Posterior vena cava (tissue), 2 donors: ENCODE measurements at regions of chr3 and their contacts with region 1.

Region 1: GRCh38 chr3:69682878-69683806 is 56.1 kb upstream of the MITF start:
- DNase-seq: no peak

Region 2: GRCh38 chr3:69791919-69792399 is 108.8 kb after region 1 on chr3:
- intact Hi-C with region 1: loop called in 1 of 2 experiments (anchors 5 kb)
- DNase-seq: no peak

Region 3: DNA sequence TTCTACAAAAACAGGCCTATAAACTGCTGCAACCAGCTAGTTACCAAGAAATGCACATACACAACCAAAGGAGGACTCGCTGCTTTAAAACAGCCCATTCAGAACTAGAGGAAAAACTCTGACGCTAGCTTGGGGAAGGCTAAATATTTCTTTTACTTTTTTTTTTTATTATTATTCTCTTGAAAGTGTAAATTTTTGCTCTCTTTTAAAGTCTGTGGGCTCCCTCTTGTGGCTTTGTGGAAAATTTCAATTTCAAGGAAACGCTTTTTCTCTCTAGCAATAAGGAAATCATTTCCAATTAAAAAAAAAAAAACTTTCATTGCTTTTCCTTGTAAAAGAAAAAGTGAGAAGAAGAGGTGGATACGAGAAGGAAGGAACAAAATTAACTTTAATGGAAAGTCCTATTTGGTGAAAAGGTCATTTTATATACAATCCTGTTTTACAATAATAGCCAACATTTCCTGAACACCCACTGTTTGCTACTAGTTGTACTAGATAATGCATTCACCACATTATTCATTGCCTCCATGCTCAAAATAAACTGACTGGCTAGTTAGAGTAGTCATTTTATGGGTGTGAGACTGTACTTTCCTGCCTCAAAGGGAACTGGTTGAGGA is 265.2 kb after region 1 on chr3:
- intact Hi-C with region 1: loop called (anchors 5 to 10 kb)
- DNase-seq: no peak

Region 4: DNA sequence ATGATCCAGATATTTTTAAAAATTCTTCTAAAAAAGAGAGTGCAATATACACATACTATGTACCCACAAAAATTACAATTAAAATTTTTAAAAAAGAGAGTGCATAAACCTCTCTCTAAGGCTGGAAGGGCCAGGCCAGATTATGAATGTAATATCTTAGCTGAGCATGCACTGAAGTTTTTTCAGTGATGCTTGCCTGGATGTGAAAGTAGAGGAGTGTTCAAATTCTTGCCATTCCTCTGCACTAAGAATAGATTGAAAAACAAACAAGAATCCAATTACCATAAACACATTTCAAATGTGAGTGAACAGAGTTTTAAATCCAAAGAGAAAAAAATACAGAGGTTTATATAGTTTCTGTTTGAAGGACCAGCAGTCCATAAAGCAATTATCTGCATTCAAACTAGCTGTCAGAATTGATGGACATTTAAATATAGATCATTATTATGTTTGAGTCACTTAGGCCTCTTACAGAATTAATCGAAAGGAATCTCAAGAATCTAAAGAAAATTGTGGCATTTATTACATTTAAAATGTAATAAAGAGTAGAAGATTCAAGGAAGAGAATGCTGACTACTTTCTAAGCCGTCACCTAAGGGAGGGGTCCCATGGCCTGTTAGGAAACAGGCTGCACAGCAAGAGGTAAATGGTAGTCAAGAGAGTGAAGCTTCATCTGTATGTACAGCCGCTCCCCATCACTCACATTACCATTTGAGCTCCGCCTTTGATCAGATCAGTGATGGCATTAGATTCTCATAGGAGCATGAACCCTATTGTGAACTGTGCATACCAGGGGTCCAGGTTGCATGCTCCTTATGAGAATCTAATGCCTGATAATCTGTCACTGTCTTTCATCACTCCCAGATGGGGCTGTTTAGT is 788.6 kb after region 1 on chr3:
- intact Hi-C with region 1: loop called in 1 of 2 experiments (anchors 5 kb)
- DNase-seq: no peak